A549 (cell line): ENCODE measurements at regions of chr10 and their contacts with region 1.

Region 1: GRCh38 chr10:116627386-116627933 is 6.7 kb downstream of the PNLIPRP2 start:
- DNase-seq: peak; percentile 44 to 48
- ATAC-seq: peak; percentile 92 to 97
- H3K4me3 ChIP-seq: peak overlapping the region; percentile 56
- H3K27ac ChIP-seq: peak overlapping the region; percentile 58 to 74; a peak in 4 of 6 replicates
- H3K4me1 ChIP-seq: no peaks in the 10 kb centered on the region
- CTCF ChIP-seq: peak; percentile 52
- EP300 ChIP-seq: no peak
- POLR2A ChIP-seq: no peak
- RAD21 ChIP-seq: peak; percentile 47 to 67

Region 2: GRCh38 chr10:116615199-116615776 is 12.2 kb before region 1 on chr10:
- CTCF ChIA-PET with region 1: interaction called, 10 read pairs
- POLR2A ChIA-PET with region 1: no interaction called
- DNase-seq: no peak
- ATAC-seq: no peak
- H3K4me3 ChIP-seq: no peak overlapping the region
- H3K27ac ChIP-seq: no peak overlapping the region
- H3K4me1 ChIP-seq: no peaks in the 10 kb centered on the region
- CTCF ChIP-seq: no peak
- EP300 ChIP-seq: no peak
- POLR2A ChIP-seq: no peak
- RAD21 ChIP-seq: no peak